PC-9 (cell line): ENCODE measurements at regions of chr1 and their contacts with region 1.

Region 1: DNA sequence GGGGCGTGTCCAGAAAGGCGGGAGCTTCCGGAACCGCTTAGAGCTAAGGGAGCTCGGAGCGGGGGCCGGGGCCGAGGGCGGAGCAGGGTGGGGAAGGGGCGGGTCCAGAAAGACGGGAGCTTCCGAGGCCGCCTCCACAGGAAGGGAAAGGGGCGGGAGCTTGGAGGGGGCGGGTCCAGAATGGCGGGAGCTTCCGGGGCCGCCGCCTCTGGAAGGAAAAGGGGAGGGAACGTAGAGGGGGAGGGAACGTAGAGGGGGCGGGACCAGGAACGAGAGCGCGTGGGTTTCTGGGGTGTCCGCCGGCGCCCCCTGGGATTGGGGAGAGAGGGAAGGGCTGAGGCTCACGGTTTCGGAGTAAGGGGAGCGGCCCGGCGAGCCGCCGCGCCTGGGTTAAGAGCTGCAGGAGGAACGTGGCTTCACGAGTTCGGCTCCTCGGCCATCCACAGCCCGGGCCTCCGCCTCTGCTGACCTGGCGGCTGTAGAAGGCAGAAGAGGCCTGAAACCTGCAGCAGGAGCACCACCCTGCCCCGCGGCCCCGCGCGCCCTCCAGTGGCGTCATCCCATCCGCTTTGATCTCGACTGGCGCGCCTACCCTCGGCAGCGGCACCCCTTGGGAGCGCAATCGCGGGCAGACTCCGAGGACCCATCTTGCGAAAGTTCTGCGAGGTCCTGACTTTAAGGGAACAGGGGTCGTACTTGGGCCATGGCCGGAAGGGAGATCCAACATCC is 22.9 kb upstream of the HPDL start:
- DNase-seq: peak; percentile 89 to 96
- H3K4me3 ChIP-seq: peak overlapping the region; percentile 60
- H3K27ac ChIP-seq: peak overlapping the region; percentile 72
- H3K4me1 ChIP-seq: peaks cover 10% of the 10 kb centered on the region
- H3K27me3 ChIP-seq: no peaks in the 10 kb centered on the region
- CTCF ChIP-seq: peak; percentile 69

Region 2: GRCh38 chr1:44739361-44740178 is 564.2 kb before region 1 on chr1 and contains the start of gene KIF2C:
- CTCF ChIA-PET with region 1: no interaction called
- POLR2A ChIA-PET with region 1: no interaction called
- intact Hi-C with region 1: loop called (anchors 2 kb)
- DNase-seq: peak; percentile 92 to 98
- H3K4me3 ChIP-seq: peak within 1 kb of the TSS; percentile 65
- H3K27ac ChIP-seq: peak within 1 kb of the TSS; percentile 79
- H3K4me1 ChIP-seq: peaks cover 18% of the 10 kb centered on the region
- H3K27me3 ChIP-seq: no peaks in the 10 kb centered on the region
- CTCF ChIP-seq: 0 out of 2 replicates have a peak, but pooled peaks have one; percentile 16
- total RNA-seq, gene KIF2C: 103 and 119 TPM in 2 replicates

Region 3: DNA sequence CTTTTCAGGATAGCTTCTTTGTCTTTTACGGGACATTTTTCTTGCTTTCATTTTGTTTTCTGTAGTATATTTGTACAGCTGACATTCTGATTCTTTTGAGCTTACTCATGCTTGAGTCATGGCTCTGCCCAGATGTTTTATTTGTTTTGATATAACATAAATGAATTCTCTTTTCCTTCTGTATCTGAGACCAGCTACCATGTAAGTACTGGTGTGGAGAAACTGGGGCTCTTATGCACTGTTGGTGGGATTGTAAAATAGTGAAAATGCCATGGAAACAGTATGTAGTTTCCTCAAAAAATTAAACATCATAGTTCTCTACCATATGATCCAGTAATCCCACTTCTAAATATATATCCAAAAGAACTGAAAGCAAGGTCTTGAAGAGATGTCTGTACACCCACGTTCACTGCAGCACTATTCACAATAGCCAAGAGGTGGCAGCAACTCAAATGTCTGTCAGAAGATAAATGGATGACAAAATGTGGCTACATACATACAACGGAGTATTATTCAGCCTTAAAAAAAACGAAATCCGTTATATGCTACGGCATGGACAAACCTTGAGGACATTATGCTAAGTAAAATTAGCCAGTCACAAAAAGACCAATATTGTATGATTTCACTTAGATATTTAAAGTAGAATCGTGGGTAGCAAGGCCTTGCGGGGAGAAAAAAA is 378.8 kb before region 1 on chr1:
- CTCF ChIA-PET with region 1: interaction called, 16 read pairs
- POLR2A ChIA-PET with region 1: no interaction called
- intact Hi-C with region 1: no loop called
- DNase-seq: peak; percentile 8 to 44
- H3K4me3 ChIP-seq: no peak overlapping the region
- H3K27ac ChIP-seq: no peak overlapping the region
- H3K4me1 ChIP-seq: peaks cover 10% of the 10 kb centered on the region; the same call in 1 of the 2 replicates
- H3K27me3 ChIP-seq: no peaks in the 10 kb centered on the region
- CTCF ChIP-seq: peak; percentile 54; the same call in 1 of the 2 replicates

Region 4: DNA sequence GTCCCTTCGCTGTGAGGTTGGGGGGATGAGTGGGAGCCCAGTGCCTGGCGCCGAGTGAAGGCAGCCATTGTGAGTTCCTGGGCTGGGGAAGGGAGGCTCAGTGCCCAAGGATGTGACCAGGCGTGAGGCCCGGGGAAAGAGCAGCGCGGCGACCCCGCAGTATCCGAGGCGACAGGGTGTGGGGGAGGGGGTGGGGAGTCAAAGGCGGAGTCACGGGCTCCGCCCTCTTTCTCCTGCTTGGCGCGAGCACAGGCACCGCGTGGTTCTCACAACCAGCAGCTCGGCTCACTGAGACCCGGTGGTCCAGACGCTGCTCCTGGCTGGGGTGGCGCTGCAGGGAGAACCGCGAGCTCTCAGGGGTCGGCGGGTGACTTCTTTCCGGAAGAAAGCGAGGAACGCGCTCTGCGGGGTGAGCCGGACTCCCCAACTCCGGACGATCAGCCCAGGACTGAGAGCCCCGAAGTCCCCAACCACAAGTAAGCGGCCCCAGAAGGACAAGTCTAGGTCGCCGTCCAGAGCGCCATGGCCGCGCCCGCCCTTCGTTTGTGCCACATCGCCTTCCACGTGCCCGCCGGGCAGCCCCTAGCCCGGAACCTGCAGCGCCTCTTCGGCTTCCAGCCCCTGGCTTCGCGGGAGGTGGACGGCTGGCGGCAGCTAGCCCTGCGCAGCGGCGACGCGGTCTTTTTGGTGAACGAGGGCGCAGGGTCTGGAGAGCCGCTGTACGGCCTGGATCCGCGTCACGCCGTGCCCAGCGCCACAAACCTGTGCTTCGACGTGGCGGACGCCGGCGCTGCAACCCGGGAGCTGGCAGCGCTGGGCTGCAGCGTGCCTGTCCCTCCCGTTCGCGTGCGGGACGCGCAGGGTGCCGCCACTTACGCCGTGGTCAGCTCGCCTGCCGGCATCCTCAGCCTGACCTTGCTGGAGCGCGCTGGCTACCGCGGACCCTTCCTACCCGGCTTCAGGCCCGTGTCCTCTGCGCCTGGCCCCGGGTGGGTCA is 23.2 kb after region 1 on chr1 and contains the start of gene HPDL:
- CTCF ChIA-PET with region 1: interaction called, 19 read pairs
- POLR2A ChIA-PET with region 1: interaction called, 21 read pairs
- intact Hi-C with region 1: loop called (anchors 1 kb)
- DNase-seq: peak in 1 of 2 experiments; percentile 47
- H3K4me3 ChIP-seq: peak within 1 kb of the TSS; percentile 85
- H3K27ac ChIP-seq: peak within 1 kb of the TSS; percentile 77
- H3K4me1 ChIP-seq: peaks cover 41% of the 10 kb centered on the region
- H3K27me3 ChIP-seq: no peaks in the 10 kb centered on the region
- CTCF ChIP-seq: no peak
- total RNA-seq, gene HPDL: 10.4 and 12.7 TPM in 2 replicates

Region 5: DNA sequence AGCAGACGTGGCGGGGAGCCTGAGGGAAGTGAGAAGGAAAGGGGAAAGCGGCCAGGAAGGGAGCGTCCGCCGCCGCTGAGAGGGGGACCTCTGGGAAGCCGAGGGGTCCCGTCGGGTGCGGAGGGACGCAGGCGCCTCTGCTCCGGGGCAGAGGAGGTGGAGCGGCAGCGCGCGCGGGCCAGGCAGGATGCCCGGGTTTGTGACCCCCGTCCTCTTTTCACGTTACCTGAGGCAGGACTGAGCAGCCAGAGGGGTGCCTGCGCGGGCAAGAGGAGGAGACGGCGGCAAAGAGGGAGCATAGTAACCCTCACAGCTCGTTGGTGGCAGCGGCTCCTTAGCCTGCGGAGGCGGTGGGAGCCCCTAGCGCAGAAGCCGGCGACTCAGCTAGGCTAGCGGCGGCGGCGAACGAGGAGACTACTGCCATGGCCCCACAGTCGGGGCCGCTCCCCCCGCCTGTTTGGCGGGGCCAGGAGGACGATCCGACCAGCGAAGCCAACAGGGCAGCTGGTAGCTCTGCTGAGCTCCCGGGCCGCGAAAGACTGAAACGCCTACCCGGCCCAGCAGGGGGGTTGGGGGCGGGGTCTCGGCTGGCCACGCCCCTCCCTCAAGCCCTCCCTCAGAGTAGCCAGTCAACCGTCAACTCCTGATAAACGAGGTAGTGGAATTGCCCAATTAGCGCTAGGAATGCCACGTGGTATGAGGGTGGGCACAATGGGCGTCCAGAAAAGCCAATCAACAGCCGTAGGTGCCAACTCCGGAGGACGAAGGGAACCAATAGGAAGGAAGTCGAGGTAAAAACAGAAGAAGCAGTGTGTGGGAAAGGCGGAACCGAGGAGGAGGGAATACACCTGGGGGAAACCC is 187.1 kb after region 1 on chr1 and contains the start of gene TESK2:
- CTCF ChIA-PET with region 1: interaction called, 13 read pairs
- POLR2A ChIA-PET with region 1: interaction called, 10 read pairs
- intact Hi-C with region 1: loop called (anchors 1 kb)
- DNase-seq: peak; percentile 100
- H3K4me3 ChIP-seq: peak within 1 kb of the TSS; percentile 73
- H3K27ac ChIP-seq: no peak within 1 kb of the TSS
- H3K4me1 ChIP-seq: peaks cover 16% of the 10 kb centered on the region
- H3K27me3 ChIP-seq: no peaks in the 10 kb centered on the region
- CTCF ChIP-seq: 0 out of 2 replicates have a peak, but pooled peaks have one; percentile 20
- total RNA-seq, gene TESK2: 13.8 and 17.5 TPM in 2 replicates

Region 6: GRCh38 chr1:46179138-46180081 is 875.7 kb after region 1 on chr1:
- CTCF ChIA-PET with region 1: no interaction called
- POLR2A ChIA-PET with region 1: interaction called, 13 read pairs
- intact Hi-C with region 1: no loop called
- DNase-seq: peak; percentile 74 to 88
- H3K4me3 ChIP-seq: peak overlapping the region; percentile 83; the same call in 1 of the 2 replicates
- H3K27ac ChIP-seq: peak overlapping the region; percentile 91
- H3K4me1 ChIP-seq: peaks cover 65% of the 10 kb centered on the region
- H3K27me3 ChIP-seq: no peaks in the 10 kb centered on the region
- CTCF ChIP-seq: peak; percentile 95